ENCODE measurements at regions of chr7 and their contacts with region 1.

Region 1: GRCh38 chr7:149245244-149245643 is 5.8 kb downstream of the ZNF212 start:
- DNase-seq: peak; percentile 75
- H3K4me3 Mint-ChIP-seq: no peak overlapping the region
- H3K27ac Mint-ChIP-seq: peak overlapping the region; percentile 91
- H3K4me1 Mint-ChIP-seq: peaks cover 75% of the 10 kb centered on the region
- H3K27me3 Mint-ChIP-seq: no peaks in the 10 kb centered on the region

Region 2: DNA sequence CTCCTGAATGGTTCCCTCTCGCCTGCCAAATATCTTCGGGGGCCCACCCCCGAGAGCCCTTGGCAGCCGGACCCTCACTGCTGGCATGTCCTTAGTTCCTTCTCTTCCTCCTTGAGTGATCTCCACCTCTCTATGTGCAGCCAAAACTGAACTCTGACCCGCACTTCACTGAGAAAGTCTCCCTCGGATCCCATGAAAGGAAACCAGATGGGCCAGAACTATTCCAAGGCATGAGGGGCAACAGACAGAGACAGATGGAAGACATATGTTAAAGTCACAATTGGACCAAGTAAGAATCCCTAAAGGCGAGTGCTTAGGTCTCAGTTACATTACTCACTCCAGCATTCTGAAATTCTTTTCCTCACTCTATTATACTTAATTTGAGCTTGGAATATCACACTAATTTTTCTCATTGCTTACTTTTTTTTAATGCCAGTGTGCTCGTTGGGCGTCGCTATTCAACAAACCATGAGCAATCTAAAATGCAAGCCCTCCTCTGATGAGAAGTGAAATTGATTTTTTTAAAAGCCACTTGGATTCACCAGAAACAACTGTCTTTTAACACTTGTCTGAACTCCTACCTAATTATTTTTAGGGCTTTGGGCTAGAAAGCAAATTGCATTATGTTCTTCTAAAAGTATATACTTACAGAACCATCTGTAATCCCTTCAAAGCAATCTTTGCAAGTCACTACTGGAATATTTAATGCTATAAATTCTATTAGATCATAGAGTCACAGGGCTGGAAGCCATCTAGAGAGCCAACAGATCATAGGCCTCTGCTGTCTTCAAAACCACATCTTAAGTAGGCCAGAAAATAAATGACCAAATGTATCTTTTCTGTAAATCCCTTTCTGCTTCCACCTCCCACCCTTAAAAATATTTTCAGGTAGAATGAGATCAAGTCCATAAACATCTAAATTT is 317.9 kb before region 1 on chr7:
- CTCF ChIA-PET with region 1: no interaction called
- intact Hi-C with region 1: loop called (anchors 5 kb)
- DNase-seq: no peak
- H3K4me3 Mint-ChIP-seq: peak overlapping the region; percentile 34
- H3K27ac Mint-ChIP-seq: peak overlapping the region; percentile 92
- H3K4me1 Mint-ChIP-seq: peaks cover 67% of the 10 kb centered on the region
- H3K27me3 Mint-ChIP-seq: no peaks in the 10 kb centered on the region

Region 3: GRCh38 chr7:149209518-149210269 is 35.5 kb before region 1 on chr7:
- CTCF ChIA-PET with region 1: no interaction called
- intact Hi-C with region 1: loop called (anchors 2 kb)
- DNase-seq: peak; percentile 86
- H3K4me3 Mint-ChIP-seq: no peak overlapping the region
- H3K27ac Mint-ChIP-seq: peak overlapping the region; percentile 72
- H3K4me1 Mint-ChIP-seq: peaks cover 5% of the 10 kb centered on the region
- H3K27me3 Mint-ChIP-seq: no peaks in the 10 kb centered on the region

Region 4: DNA sequence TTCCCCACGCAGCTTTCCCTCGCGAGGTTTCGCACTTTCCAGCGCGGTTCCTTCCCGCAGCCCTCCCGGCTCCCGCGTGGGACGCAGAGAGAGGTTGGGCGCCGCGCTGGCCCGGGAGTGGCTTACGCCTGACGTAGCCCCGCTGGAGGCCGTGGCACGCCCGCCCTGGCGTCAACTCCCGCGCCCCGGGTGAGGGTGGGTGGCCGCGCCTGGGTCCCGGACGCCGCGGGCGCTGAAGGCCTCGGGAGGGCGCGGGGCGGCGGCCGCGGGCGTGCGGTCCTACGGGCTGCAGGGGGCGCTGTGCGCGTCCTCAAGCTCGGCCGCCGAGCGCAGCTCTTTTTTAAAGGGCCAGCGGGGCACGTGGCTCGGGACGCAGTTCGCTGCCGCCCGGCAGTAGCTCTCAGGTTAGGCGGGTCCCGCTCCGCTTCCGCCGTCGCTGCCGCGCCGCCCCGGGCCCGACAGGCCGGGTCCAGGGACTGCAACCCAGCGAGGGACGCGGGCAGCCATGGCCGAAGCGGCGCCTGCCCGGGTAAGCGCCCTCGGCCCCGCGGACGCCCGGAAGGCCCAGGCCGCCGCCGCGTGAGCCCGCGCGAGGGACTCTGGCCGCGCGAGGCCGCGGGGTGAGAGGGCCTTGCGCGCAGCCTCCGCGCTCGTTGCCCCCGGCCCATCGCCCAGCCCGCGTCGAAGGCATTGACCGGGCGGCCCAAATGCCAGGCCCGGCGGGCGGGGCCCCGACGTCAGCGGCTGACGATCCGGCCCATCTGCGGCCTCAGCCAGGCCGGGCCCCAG is 16.8 kb after region 1 on chr7 and contains the start of gene ZNF783:
- CTCF ChIA-PET with region 1: interaction called, 49 read pairs
- intact Hi-C with region 1: loop called (anchors 1 kb)
- DNase-seq: peak; percentile 85
- H3K4me3 Mint-ChIP-seq: peak within 1 kb of the TSS; percentile 75
- H3K27ac Mint-ChIP-seq: peak within 1 kb of the TSS; percentile 74
- H3K4me1 Mint-ChIP-seq: peaks cover 29% of the 10 kb centered on the region
- H3K27me3 Mint-ChIP-seq: no peaks in the 10 kb centered on the region
- total RNA-seq, gene ZNF783: 6.8 to 7.1 TPM

Region 5: DNA sequence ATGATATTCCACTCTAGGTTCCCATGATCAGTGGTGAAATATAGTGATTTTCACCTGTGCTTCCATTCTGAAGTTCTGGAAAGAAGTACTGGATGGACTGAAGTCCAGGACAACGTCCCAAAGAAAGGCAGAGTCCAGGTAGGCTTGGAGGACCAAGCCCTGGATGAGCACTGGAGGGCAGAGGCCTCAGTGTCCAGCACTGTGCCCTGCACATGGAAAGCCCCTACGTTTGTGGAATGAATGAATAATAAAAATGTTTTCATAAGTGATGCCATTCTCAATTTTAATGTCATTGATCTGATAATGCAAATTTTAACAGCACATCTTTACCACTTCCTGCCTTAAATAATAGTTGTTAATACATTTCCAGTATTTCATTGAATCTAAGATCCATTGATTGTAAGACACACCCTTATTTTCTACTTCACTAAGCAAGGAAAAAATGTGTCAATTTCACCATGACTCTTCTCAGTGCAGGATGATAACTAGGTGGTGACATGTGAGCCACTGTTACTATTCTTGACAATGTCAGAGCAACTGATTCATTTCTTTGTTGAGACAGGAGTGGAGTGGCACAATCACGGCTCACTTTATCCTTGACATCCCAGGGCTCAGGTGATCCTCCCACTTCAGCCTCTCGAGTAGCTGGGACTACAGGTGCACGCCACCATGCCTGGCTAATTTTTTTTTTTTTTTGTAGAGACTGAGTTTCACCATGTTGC is 52.0 kb after region 1 on chr7:
- CTCF ChIA-PET with region 1: no interaction called
- intact Hi-C with region 1: loop called (anchors 1 kb)
- DNase-seq: peak; percentile 51
- H3K4me3 Mint-ChIP-seq: no peak overlapping the region
- H3K27ac Mint-ChIP-seq: peak overlapping the region; percentile 84
- H3K4me1 Mint-ChIP-seq: peaks cover 17% of the 10 kb centered on the region
- H3K27me3 Mint-ChIP-seq: no peaks in the 10 kb centered on the region

Region 6: GRCh38 chr7:149598721-149599306 is 353.6 kb after region 1 on chr7:
- CTCF ChIA-PET with region 1: no interaction called
- intact Hi-C with region 1: loop called (anchors 1 kb)
- DNase-seq: peak; percentile 69
- H3K4me3 Mint-ChIP-seq: no peak overlapping the region
- H3K27ac Mint-ChIP-seq: peak overlapping the region; percentile 51
- H3K4me1 Mint-ChIP-seq: peaks cover 36% of the 10 kb centered on the region
- H3K27me3 Mint-ChIP-seq: no peaks in the 10 kb centered on the region

Region 7: DNA sequence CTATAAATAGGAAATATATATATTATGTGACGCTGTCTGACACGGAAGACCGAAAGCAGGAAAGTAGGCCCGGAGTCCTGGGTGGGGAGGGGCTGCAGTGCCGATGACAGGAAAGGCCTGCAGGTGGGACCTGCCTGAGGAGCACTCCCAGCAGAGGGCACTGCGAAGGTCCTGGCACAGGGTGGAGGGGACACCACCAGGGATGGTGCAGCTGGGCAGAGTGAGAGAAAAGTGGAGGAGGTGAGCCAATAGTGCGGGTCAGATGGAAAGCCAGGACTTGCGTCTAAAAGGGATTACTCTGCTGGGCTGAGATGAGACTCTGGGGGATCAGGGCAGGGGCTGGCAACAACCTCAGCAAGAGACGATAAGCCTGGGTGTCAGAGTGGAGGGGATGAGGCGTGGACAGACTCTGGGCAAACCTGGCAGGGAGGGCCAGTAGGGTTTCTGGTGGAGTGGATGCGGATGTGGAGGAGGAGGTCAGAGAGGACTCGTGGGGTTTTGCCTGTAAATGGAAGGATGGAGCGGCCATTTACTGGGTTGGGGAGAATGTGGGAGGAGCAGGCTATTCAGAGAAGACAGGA is 370.5 kb after region 1 on chr7:
- CTCF ChIA-PET with region 1: no interaction called
- intact Hi-C with region 1: no loop called
- DNase-seq: no peak
- H3K4me3 Mint-ChIP-seq: no peak overlapping the region
- H3K27ac Mint-ChIP-seq: no peak overlapping the region
- H3K4me1 Mint-ChIP-seq: peaks cover 2% of the 10 kb centered on the region
- H3K27me3 Mint-ChIP-seq: no peaks in the 10 kb centered on the region

Measured in activated naive CD4-positive, alpha-beta T cell treated with anti-CD3 and anti-CD28 coated beads for 36 hours (primary cell).